ENCODE measurements at regions of chr5 and their contacts with region 1.

Region 1: DNA sequence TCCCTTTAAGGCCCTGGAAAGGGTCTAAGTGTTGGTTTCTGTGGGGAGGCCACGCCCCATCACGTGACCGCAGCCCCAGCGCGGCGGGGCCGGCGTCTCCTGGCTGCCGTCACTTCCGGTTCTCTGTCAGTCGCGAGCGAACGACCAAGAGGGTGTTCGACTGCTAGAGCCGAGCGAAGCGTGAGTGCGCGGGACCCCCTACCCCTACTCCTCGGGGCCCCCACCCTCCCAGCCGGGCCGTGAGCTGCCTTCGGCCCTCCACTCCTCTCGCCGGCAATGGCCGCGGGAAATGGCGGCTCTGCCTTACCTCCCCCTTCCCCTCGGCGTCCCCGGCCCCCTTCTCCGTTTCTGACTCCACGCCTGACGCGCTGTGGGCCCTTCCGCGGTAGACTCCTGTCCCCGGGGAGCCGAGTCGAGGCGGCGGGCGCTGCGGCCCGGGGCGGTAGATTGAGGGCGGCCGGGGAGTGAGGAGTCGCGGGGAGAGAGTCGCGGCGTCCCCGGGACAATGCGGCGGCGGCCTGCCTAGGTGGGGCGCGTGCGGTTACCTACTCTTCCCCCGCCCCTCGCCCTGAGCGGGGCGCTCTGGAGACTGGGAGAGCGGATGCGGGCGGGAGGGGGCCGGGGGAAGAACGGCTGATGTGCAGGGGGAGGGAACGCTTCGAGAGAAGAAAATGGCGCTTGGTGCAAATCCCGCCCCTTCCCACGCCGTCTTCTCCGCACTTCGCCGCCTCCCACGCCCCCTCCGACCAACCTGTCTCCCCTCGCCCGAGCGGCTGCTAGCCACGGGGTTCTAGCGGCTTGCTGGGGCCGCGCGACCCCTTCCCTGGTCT is at the start of gene SUB1:
- DNase-seq: peak; percentile 91
- H3K4me3 ChIP-seq: peak within 1 kb of the TSS; percentile 90
- H3K27ac ChIP-seq: peak within 1 kb of the TSS; percentile 65
- H3K4me1 ChIP-seq: peaks cover 40% of the 10 kb centered on the region
- CTCF ChIP-seq: peak; percentile 26; the same call in 1 of the 2 replicates
- total RNA-seq, gene SUB1: 40.3 and 56.9 TPM in 2 replicates

Region 2: DNA sequence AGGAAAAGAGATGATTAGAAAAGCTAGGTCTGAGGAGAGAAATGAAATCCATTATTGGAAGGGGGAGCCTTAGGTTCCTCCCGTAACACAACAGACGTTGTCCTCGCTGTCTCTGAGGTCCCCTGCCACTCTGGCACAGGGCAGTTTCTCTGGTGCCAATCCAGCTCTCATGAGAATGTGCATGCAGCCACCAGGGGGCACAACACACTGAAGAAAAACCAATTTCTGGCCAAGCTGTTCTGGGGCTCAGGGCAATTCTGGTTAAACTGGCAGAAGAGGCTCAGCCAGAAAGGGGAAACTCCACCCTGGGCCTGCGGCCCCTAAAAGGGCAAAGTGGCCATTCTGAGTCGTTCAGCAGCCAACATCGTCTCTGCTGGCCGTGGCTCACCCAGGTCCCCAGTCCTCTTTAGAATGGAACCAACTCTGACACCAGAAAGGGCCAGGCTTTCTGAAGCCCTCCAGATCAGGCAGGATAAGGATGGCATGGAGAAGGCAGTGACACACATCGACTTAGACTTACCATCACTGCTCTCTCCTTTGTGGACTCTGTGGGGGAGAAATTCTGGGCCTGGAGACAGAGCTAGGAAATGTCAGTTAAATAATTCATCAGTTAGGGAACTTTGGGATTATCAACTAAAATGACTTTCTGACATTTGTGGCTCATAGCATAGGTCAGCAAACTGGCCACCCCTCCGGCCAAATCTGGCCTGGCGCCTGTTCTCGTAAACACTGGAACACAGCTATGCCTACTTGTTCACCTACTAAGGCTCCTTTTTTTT is 353.0 kb before region 1 on chr5:
- CTCF ChIA-PET with region 1: no interaction called
- POLR2A ChIA-PET with region 1: interaction called, 4 read pairs
- intact Hi-C with region 1: loop called (anchors 5 kb)
- DNase-seq: peak; percentile 78
- H3K4me3 ChIP-seq: no peak overlapping the region
- H3K27ac ChIP-seq: no peak overlapping the region
- H3K4me1 ChIP-seq: no peaks in the 10 kb centered on the region
- CTCF ChIP-seq: peak; percentile 91

Region 3: GRCh38 chr5:32329308-32329834 is 256.3 kb before region 1 on chr5:
- CTCF ChIA-PET with region 1: no interaction called
- POLR2A ChIA-PET with region 1: no interaction called
- intact Hi-C with region 1: loop called (anchors 5 kb)
- DNase-seq: peak; percentile 74
- H3K4me3 ChIP-seq: no peak overlapping the region
- H3K27ac ChIP-seq: no peak overlapping the region
- H3K4me1 ChIP-seq: peaks cover 3% of the 10 kb centered on the region
- CTCF ChIP-seq: peak; percentile 88

Region 4: GRCh38 chr5:32489791-32490582 is 95.7 kb before region 1 on chr5:
- CTCF ChIA-PET with region 1: interaction called, 24 read pairs
- POLR2A ChIA-PET with region 1: interaction called, 4 read pairs
- intact Hi-C with region 1: loop called (anchors 1 kb)
- DNase-seq: peak; percentile 77
- H3K4me3 ChIP-seq: no peak overlapping the region
- H3K27ac ChIP-seq: no peak overlapping the region
- H3K4me1 ChIP-seq: no peaks in the 10 kb centered on the region
- CTCF ChIP-seq: peak; percentile 90

Region 5: DNA sequence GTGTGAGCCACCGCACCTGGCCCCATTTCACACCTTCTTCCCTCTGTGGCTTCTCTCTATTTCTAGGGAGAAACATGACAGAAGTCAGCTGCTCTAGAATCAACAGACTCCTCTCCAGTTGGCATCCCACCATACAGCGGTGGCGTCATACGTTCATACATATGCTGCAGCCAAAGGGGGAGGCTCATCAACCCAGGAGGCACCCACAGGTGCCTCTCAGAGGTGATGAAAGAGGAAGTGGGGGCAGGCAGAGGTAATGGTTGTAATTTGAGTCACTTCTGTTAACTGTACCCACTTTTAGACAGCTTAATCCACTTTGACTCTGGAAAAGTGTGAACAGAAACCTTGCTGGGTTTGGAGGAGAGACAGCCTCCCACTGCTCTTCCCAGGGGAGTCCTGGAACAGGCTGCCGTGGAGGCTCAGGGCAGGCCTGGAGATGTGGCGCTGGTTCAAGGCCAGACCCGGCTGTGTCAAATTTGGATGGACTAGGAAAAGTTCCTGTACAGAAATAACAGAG is 47.6 kb before region 1 on chr5:
- CTCF ChIA-PET with region 1: interaction called, 4 read pairs
- POLR2A ChIA-PET with region 1: interaction called, 7 read pairs
- intact Hi-C with region 1: loop called (anchors 2 kb)
- DNase-seq: peak; percentile 76
- H3K4me3 ChIP-seq: no peak overlapping the region
- H3K27ac ChIP-seq: peak overlapping the region; percentile 15
- H3K4me1 ChIP-seq: peaks cover 44% of the 10 kb centered on the region
- CTCF ChIP-seq: no peak